GM13977 (cell line): ENCODE measurements at regions of chr17 and their contacts with region 1.

Region 1: GRCh38 chr17:73255671-73256181 is 6.0 kb downstream of the CPSF4L start:
- DNase-seq: peak; percentile 79
- CTCF ChIP-seq: peak; percentile 96

Region 2: DNA sequence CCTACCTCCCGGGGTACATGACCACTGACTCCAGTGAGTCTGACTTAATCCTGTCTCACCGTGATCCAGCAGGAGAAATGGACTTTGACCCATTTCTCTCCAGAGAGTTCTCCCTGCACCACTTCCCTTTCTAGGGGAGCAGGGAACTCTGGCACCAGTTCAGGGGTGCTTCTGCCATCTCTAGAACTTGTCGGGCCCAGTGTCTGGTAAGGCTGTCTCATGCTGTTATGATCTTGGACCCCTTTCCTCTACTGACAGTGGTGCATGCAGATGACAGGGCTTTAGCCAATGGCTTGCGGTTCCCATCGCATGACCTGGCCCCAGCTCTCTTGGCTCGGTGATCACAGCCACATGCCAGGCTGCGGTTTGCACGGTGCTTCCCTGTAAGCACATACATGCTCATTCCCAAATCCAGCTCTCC is 225.2 kb before region 1 on chr17:
- in situ Hi-C with region 1: no loop called
- DNase-seq: no peak
- CTCF ChIP-seq: no peak

Region 3: DNA sequence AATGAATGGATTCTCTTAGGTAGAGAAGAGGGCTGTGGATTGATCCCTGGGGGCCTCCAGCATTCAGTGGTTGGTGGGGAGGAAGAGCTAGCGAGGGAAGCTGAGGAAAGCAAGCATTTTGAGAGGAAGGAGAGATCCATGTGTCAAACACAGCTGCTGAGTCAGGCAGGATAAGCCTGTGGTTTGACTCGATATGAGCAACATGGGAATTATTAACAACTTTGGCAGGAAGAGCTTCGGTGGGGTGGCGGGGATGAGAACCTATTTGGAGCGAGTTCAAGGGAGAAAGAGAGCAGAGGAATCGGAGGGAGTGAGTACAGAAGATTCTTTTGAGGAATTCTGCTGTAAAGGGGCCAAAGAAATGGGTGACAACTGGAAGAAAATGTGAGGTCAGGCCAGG is 115.6 kb after region 1 on chr17:
- in situ Hi-C with region 1: loop called (anchors 10 kb)
- DNase-seq: no peak
- CTCF ChIP-seq: no peak